Calu3 (cell line): ENCODE measurements at regions of chr15 and their contacts with region 1.

Region 1: DNA sequence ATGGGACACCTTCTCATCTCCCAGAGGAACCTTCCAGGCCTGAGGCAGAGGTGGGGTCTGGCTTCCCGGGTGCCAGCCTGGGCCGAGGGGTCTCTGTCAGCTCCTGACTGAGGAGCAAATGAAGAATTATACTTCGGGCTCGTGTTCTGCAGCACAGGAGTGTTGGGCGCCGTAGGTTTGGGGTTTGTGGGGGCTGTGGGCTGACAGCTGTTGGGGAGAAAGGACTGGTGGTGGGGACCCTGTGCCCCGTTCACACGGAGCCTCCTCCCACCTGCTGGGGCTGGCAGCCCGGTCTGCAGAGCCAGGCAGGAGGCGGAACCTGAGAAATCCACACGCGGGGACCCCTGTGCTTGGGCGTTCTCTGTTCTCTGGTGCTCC is 59.7 kb downstream of the ADAMTS7 start:
- DNase-seq: no peak
- H3K4me3 Mint-ChIP-seq: no peak overlapping the region
- H3K27ac Mint-ChIP-seq: no peak overlapping the region
- H3K4me1 Mint-ChIP-seq: peaks cover 8% of the 10 kb centered on the region
- H3K27me3 Mint-ChIP-seq: peaks cover 27% of the 10 kb centered on the region
- CTCF ChIP-seq: no peak

Region 2: DNA sequence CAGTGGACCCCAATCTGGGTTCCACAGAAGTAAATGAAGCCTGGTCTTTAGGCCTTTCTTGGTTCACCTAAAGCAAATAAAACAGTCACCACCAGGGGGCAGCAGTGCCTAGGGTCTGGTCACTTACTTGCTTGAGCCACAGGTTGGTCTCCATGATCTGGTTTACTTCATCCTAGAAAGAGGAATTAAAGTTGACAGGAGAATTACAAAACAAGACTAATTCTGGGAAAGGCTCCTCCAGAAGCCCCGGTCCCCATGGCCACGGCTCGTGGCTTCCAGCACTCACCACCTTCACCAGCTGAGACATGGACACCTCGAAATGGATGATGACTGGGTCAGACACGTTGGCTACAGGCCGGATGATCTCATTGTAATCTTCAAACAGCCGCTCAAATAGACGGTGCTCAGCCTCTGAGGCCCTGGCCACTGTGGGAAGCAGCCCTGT is 133.1 kb before region 1 on chr15:
- CTCF ChIA-PET with region 1: no interaction called
- intact Hi-C with region 1: loop called (anchors 1 kb)
- DNase-seq: peak; percentile 95
- H3K4me3 Mint-ChIP-seq: no peak overlapping the region
- H3K27ac Mint-ChIP-seq: no peak overlapping the region
- H3K4me1 Mint-ChIP-seq: no peaks in the 10 kb centered on the region
- H3K27me3 Mint-ChIP-seq: peaks cover 57% of the 10 kb centered on the region
- CTCF ChIP-seq: peak; percentile 86

Region 3: GRCh38 chr15:78767331-78767951 is 15.8 kb after region 1 on chr15:
- CTCF ChIA-PET with region 1: no interaction called
- intact Hi-C with region 1: no loop called
- DNase-seq: peak; percentile 39
- H3K4me3 Mint-ChIP-seq: no peak overlapping the region
- H3K27ac Mint-ChIP-seq: no peak overlapping the region
- H3K4me1 Mint-ChIP-seq: no peaks in the 10 kb centered on the region
- H3K27me3 Mint-ChIP-seq: peaks cover 56% of the 10 kb centered on the region
- CTCF ChIP-seq: no peak